ENCODE measurements at regions of chr3 and their contacts with region 1.

Region 1: GRCh38 chr3:160665784-160666526 is 11.0 kb upstream of the ARL14 start:
- DNase-seq: peak; percentile 86
- H3K4me3 ChIP-seq: no peak overlapping the region
- H3K27ac ChIP-seq: no peak overlapping the region
- H3K4me1 ChIP-seq: peaks cover 21% of the 10 kb centered on the region
- H3K27me3 ChIP-seq: no peaks in the 10 kb centered on the region
- CTCF ChIP-seq: no peak

Region 2: GRCh38 chr3:160676547-160677303 is 10.8 kb after region 1 on chr3 and contains the start of gene ARL14:
- CTCF ChIA-PET with region 1: no interaction called
- dilution Hi-C with region 1: no loop called
- in situ Hi-C with region 1: no loop called
- intact Hi-C with region 1: loop called (anchors 1 kb)
- DNase-seq: peak; percentile 95
- H3K4me3 ChIP-seq: no peak within 1 kb of the TSS
- H3K27ac ChIP-seq: peak within 1 kb of the TSS; percentile 90
- H3K4me1 ChIP-seq: peaks cover 32% of the 10 kb centered on the region
- H3K27me3 ChIP-seq: no peaks in the 10 kb centered on the region
- CTCF ChIP-seq: no peak
- total RNA-seq, gene ARL14: 0.17 to 0.31 TPM

Measured in mammary epithelial cell (primary cell).